ENCODE measurements at regions of chr18 and their contacts with region 1.

Region 1: DNA sequence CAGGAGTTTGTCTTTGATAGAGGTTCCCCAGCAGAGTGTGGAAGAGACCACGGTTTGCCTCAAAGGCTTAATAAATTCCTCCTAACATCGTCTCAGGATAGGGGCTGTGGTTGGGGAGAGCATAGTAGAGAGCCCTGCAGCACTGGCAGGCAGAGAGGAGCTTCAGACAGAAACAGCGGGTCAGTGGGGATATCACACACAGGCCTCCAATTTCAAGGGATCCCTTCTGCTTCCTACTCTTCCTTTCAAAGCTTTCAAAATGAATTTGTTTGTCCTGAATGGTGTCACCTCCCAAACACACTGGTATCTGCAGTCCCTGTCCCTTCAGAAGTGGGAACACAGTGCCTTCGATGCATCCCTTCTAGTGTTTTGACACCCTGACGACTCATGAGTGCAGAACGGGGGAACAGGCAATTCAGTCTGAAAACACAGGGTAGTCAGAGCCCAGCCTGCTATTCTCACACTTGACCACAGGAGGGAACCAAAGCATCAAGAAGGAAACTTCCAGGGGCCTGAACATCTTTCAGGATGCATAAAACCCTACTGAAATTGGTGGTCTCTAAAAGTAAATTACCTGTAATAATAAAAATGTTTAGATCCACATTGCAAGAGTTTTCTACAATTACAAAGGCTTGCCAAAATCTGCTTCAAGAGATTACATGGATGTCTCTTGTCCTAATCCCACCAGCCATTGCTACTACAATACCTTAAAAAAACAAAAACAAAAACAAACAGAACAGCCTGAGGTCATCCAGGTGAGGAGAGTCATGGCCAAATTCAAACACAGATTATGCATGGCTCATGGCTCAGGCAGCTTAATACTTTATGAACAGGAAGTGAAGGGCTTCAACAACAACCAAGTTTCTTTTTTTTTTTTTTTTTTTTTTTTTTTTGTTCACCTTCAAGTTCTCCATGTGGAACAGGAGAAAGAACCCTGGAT is 49.8 kb downstream of the SLC14A2 start:
- DNase-seq: peak in 1 of 2 donors; percentile 33
- ATAC-seq: peak; percentile 68 to 91 (median 80)
- H3K4me3 ChIP-seq: no peak overlapping the region
- H3K27ac ChIP-seq: no peak overlapping the region
- H3K4me1 ChIP-seq: peaks cover 11% of the 10 kb centered on the region
- H3K27me3 ChIP-seq: no peaks in the 10 kb centered on the region
- CTCF ChIP-seq: peak; percentile 94

Region 2: GRCh38 chr18:45839414-45840395 is 174.6 kb after region 1 on chr18:
- intact Hi-C with region 1: loop called in 1 of 2 experiments (anchors 5 kb)
- DNase-seq: no peak
- ATAC-seq: peak; percentile 32 to 62 (median 48)
- H3K4me3 ChIP-seq: no peak overlapping the region
- H3K27ac ChIP-seq: no peak overlapping the region
- H3K4me1 ChIP-seq: peaks cover 13% of the 10 kb centered on the region
- H3K27me3 ChIP-seq: peaks cover 0 to 41% (median 20%) of the 10 kb centered on the region in 3 donors
- CTCF ChIP-seq: peak; percentile 40

Region 3: GRCh38 chr18:45879681-45880655 is 214.9 kb after region 1 on chr18:
- intact Hi-C with region 1: loop called (anchors 5 kb)
- DNase-seq: peak; percentile 65 to 79
- ATAC-seq: peak; percentile 76 to 96 (median 86)
- H3K4me3 ChIP-seq: no peak overlapping the region
- H3K27ac ChIP-seq: no peak overlapping the region
- H3K4me1 ChIP-seq: no peaks in the 10 kb centered on the region
- H3K27me3 ChIP-seq: no peaks in the 10 kb centered on the region
- CTCF ChIP-seq: peak; percentile 99

Region 4: GRCh38 chr18:45974088-45974536 is 309.0 kb after region 1 on chr18:
- intact Hi-C with region 1: loop called (anchors 5 to 10 kb)
- DNase-seq: no peak
- ATAC-seq: peak; percentile 75 to 95 (median 86)
- H3K4me3 ChIP-seq: peak overlapping the region; percentile 24
- H3K27ac ChIP-seq: no peak overlapping the region
- H3K4me1 ChIP-seq: no peaks in the 10 kb centered on the region
- H3K27me3 ChIP-seq: no peaks in the 10 kb centered on the region
- CTCF ChIP-seq: peak; percentile 77

Region 5: DNA sequence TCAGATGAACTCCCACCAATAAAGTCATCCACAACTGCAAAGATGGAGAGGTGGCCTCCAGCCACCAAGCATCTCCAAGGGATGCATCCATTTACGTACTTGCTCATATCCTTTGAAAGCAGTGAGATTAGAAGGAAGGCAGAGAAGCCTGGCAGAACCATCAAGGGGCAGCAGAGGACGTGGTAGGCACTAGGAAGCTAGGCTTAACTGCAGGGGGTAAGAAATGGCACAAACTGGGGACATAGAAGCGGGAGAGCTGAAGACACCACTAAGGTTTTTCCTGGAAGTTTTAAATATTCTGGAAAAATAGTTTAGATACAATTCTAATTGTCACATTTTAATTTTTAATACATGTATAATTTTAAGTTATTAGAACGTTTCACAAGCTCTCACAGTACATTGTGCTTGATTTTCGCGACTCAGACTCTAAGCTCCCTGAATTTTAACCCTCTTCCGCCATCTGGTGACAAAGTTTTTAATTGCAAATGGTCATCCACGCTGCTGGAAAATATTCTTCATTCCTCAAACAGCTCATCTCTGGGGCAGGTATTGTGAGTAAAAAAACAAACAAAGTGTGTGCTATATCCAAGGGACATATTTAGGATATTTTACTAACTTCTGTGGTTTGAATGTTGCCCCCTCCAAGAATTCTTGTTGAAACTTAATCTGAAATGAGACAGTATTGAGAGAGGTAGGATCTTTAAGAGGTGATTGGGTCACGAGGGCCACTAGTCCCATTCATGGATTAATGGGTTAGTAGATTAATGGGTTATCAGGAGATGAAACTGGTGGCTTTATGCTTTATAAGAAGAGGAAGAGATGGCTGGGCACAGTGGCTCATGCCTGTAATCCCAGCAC is 408.6 kb after region 1 on chr18:
- intact Hi-C with region 1: loop called in 1 of 2 experiments (anchors 10 kb)
- DNase-seq: no peak
- ATAC-seq: peak; percentile 29 to 70 (median 52)
- H3K4me3 ChIP-seq: no peak overlapping the region
- H3K27ac ChIP-seq: no peak overlapping the region
- H3K4me1 ChIP-seq: peaks cover 16% of the 10 kb centered on the region
- H3K27me3 ChIP-seq: no peaks in the 10 kb centered on the region
- CTCF ChIP-seq: peak; percentile 71

Measured in psoas muscle (tissue), 8 donors.